PC-3 (cell line): ENCODE measurements at regions of chr1 and their contacts with region 1.

Region 1: DNA sequence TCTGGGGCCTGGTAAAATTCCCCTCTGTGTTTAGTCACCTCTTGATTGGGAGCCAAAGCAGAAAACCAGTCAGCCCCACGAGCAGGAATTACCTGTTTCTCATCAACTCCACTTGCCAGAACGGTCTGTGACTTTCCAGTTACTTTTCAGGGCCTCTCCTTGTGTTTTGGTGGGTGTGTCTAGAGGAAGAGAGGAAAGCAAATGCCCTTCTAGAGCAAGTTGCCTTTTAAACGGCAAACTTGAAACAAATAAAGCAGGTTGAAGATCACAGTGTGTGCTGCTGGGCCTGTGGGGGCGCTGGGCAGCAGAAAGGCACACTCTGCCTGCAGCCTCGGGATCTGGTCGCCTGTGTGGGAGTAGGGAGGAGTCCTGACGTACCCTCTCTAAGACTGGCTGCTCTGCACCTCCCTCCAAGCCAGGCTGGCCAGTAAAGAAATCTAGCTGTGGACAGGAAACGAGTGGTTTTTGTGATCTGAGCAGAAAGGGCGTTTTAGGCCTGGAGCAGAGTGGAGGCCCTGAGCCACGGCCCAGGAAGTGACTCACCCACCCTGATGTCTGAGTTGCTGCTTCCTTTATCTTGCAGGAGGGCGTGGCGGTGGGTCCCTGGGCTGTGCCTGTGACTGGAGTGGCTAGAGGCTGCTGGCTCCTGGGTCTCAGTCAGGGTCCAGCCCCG is 11.1 kb upstream of the S100A11 start:
- DNase-seq: peak; percentile 99
- ATAC-seq: peak; percentile 87
- H3K4me3 ChIP-seq: peak overlapping the region; percentile 64
- H3K27ac ChIP-seq: peak overlapping the region; percentile 98
- H3K4me1 ChIP-seq: peaks cover 57% of the 10 kb centered on the region
- H3K27me3 ChIP-seq: 0 out of 2 replicates have a peak, but pooled peaks cover 1% of the 10 kb centered on the region
- CTCF ChIP-seq: peak; percentile 57

Region 2: GRCh38 chr1:151773702-151774101 is 274.2 kb before region 1 on chr1:
- CTCF ChIA-PET with region 1: no interaction called
- POLR2A ChIA-PET with region 1: no interaction called
- intact Hi-C with region 1: no loop called
- DNase-seq: peak; percentile 93
- ATAC-seq: peak; percentile 98
- H3K4me3 ChIP-seq: no peak overlapping the region
- H3K27ac ChIP-seq: peak overlapping the region; percentile 50
- H3K4me1 ChIP-seq: peaks cover 14% of the 10 kb centered on the region
- H3K27me3 ChIP-seq: no peaks in the 10 kb centered on the region
- CTCF ChIP-seq: no peak

Region 3: GRCh38 chr1:152034646-152035405 is 13.0 kb before region 1 on chr1:
- CTCF ChIA-PET with region 1: interaction called, 6 read pairs
- POLR2A ChIA-PET with region 1: interaction called, 35 read pairs
- intact Hi-C with region 1: loop called (anchors 1 kb)
- DNase-seq: peak; percentile 90
- ATAC-seq: peak; percentile 69
- H3K4me3 ChIP-seq: peak overlapping the region; percentile 77
- H3K27ac ChIP-seq: peak overlapping the region; percentile 90
- H3K4me1 ChIP-seq: peaks cover 33% of the 10 kb centered on the region
- H3K27me3 ChIP-seq: no peaks in the 10 kb centered on the region
- CTCF ChIP-seq: peak; percentile 89

Region 4: GRCh38 chr1:152141974-152142584 is 94.2 kb after region 1 on chr1:
- CTCF ChIA-PET with region 1: no interaction called
- POLR2A ChIA-PET with region 1: no interaction called
- intact Hi-C with region 1: loop called (anchors 1 kb)
- DNase-seq: peak; percentile 90
- ATAC-seq: peak; percentile 95
- H3K4me3 ChIP-seq: no peak overlapping the region
- H3K27ac ChIP-seq: no peak overlapping the region
- H3K4me1 ChIP-seq: no peaks in the 10 kb centered on the region
- H3K27me3 ChIP-seq: peaks cover 25% of the 10 kb centered on the region; the same call in 1 of the 2 replicates
- CTCF ChIP-seq: peak; percentile 99

Region 5: DNA sequence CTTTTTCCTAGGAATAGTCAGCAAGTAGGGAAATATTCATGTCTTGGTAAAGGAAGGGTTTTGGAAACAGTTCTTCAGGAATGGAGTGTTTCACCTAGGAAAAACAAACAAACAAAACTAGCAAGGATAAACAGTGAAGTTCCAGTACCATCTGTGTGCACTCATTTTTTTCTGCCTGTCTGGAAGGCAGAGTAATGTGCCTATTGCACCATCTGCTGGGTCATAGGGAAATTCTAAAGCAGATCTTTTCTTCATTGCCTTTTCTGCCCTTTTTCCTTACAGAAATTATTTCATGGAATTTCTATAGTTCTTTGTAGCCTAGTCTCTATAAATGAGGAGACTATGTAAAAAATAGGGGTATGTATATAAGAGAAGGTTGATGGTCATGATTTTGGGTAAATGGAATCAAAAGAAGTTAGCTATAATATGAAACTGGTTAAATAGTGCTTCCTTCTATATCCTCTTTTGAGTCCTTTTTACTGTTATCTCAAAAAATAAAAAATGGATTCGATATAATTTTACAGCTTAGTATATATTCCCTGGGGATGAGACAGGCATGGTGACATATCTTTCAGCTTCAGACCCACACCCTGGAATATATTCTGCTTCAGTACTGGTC is 179.6 kb after region 1 on chr1:
- CTCF ChIA-PET with region 1: no interaction called
- POLR2A ChIA-PET with region 1: interaction called, 3 read pairs
- intact Hi-C with region 1: loop called (anchors 5 kb)
- DNase-seq: peak; percentile 23
- ATAC-seq: peak; percentile 53
- H3K4me3 ChIP-seq: no peak overlapping the region
- H3K27ac ChIP-seq: no peak overlapping the region
- H3K4me1 ChIP-seq: no peaks in the 10 kb centered on the region
- H3K27me3 ChIP-seq: no peaks in the 10 kb centered on the region; the same call in 1 of the 2 replicates
- CTCF ChIP-seq: peak; percentile 57

Region 6: GRCh38 chr1:152440635-152441471 is 393.0 kb after region 1 on chr1:
- CTCF ChIA-PET with region 1: no interaction called
- POLR2A ChIA-PET with region 1: no interaction called
- intact Hi-C with region 1: loop called (anchors 5 kb)
- DNase-seq: peak; percentile 82
- ATAC-seq: peak; percentile 97
- H3K4me3 ChIP-seq: no peak overlapping the region
- H3K27ac ChIP-seq: no peak overlapping the region
- H3K4me1 ChIP-seq: peaks cover 6% of the 10 kb centered on the region
- H3K27me3 ChIP-seq: peaks cover 25% of the 10 kb centered on the region
- CTCF ChIP-seq: peak; percentile 94